ENCODE measurements at regions of chrX and their contacts with region 1.

Region 1: DNA sequence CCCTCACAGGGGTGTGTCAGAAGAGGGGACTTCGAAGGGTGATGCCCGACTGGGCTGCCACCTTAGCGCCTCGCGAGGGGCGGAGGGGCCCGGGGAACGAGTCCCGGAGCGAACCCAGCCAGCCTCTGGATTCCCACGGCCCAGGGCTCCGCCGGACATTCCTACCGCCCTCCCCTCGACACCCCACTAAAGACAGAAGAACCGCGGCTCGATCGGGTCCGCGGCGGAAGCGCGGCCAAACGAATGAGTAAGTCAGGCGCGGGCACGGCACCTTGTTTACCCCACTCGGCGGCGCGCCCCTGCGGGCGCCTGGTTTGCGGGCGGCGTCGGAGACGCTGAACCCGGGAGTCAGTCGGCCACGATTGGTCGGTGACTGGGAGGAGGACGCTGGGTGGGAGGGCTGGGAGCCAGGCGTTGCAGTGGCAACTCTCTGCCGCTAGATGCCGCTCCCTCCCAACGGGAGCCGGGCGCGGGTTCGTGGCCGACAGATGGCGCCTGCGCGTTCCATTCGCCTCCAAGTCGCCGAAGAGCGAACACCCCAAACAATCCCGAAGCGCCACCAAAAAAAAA is 1.4 kb upstream of the STAG2 start:
- DNase-seq: peak; percentile 74 to 95
- H3K4me3 ChIP-seq: peak overlapping the region; percentile 52 to 83
- H3K27ac ChIP-seq: peak overlapping the region; percentile 85 to 99
- H3K4me1 ChIP-seq: no peaks in the 10 kb centered on the region
- H3K27me3 ChIP-seq: no peaks in the 10 kb centered on the region
- CTCF ChIP-seq: peak; percentile 91 to 92 (median 92)

Region 2: GRCh38 chrX:123732670-123733363 is 227.3 kb before region 1 on chrX and contains the start of gene THOC2:
- intact Hi-C with region 1: loop called (anchors 10 kb)
- DNase-seq: peak; percentile 53 to 93
- H3K4me3 ChIP-seq: peak within 1 kb of the TSS; percentile 61 to 67
- H3K27ac ChIP-seq: peak within 1 kb of the TSS; percentile 80 to 81
- H3K4me1 ChIP-seq: no peaks in the 10 kb centered on the region
- H3K27me3 ChIP-seq: no peaks in the 10 kb centered on the region
- CTCF ChIP-seq: peak; percentile 9 to 38 (median 31)
- total RNA-seq, gene THOC2: 33.5 TPM

Region 3: GRCh38 chrX:123833387-123833786 is 126.7 kb before region 1 on chrX:
- intact Hi-C with region 1: loop called (anchors 10 kb)
- DNase-seq: peak in 1 of 2 donors; percentile 70
- H3K4me3 ChIP-seq: no peak overlapping the region
- H3K27ac ChIP-seq: no peak overlapping the region
- H3K4me1 ChIP-seq: peaks cover 0 to 3% of the 10 kb centered on the region in 2 donors
- H3K27me3 ChIP-seq: no peaks in the 10 kb centered on the region
- CTCF ChIP-seq: peak; percentile 42 to 71 (median 68)

Region 4: GRCh38 chrX:123976706-123977316 is 16.7 kb after region 1 on chrX:
- intact Hi-C with region 1: loop called (anchors 1 kb)
- DNase-seq: no peak
- H3K4me3 ChIP-seq: no peak overlapping the region
- H3K27ac ChIP-seq: no peak overlapping the region
- H3K4me1 ChIP-seq: peaks cover 0 to 21% of the 10 kb centered on the region in 2 donors
- H3K27me3 ChIP-seq: no peaks in the 10 kb centered on the region
- CTCF ChIP-seq: peak in 2 of 3 experiments; percentile 11 to 25

Region 5: DNA sequence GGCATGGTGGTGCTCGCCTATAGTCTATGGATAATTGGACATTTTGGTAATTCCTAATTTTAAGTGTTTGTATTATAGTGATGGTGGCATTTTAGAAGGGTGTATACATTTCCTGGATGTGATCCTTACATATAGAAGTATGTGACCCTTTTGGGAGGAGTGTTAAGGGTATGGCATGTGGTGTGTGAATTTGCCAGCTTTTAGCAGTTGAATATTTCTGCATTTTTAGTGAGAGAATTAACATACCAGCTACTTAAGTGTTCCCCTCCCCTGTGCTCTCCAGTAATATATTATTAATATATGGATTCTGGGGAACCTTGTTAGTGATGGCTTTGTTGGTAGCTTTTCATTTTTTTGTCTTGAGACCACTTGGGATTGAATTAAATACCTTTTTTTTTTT is 56.7 kb after region 1 on chrX:
- intact Hi-C with region 1: loop called (anchors 1 kb)
- DNase-seq: no peak
- H3K4me3 ChIP-seq: no peak overlapping the region
- H3K27ac ChIP-seq: no peak overlapping the region
- H3K4me1 ChIP-seq: peaks cover 0 to 6% of the 10 kb centered on the region in 2 donors
- H3K27me3 ChIP-seq: no peaks in the 10 kb centered on the region
- CTCF ChIP-seq: no peak

Region 6: GRCh38 chrX:124163220-124163619 is 203.1 kb after region 1 on chrX:
- intact Hi-C with region 1: no loop called
- DNase-seq: no peak
- H3K4me3 ChIP-seq: no peak overlapping the region
- H3K27ac ChIP-seq: no peak overlapping the region
- H3K4me1 ChIP-seq: no peaks in the 10 kb centered on the region
- H3K27me3 ChIP-seq: no peaks in the 10 kb centered on the region
- CTCF ChIP-seq: no peak

Region 7: DNA sequence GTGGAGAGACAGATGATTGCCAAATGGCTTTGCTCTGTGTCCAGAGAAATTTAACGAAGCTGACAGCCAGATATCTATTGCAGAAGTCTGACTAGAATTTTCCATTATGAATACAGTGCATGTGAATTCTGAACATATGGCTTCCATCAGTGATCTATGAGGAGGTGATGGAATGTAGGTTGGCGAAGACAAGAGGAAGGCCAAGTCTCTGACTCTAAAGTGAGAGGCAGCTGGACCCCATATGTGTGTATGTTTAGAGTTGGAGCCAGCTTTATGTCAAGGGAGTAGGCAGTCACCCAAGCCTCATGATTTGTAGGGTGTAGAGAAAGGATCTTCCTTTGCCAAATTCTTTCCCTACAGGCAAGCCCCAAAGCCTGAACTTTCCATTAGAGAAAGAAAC is 296.1 kb after region 1 on chrX:
- intact Hi-C with region 1: loop called (anchors 10 kb)
- DNase-seq: no peak
- H3K4me3 ChIP-seq: no peak overlapping the region
- H3K27ac ChIP-seq: no peak overlapping the region
- H3K4me1 ChIP-seq: peaks cover 0 to 6% of the 10 kb centered on the region in 2 donors
- H3K27me3 ChIP-seq: no peaks in the 10 kb centered on the region
- CTCF ChIP-seq: no peak

Measured in ascending aorta (tissue), 2 donors.